Panc1 (cell line): ENCODE measurements at regions of chr2 and their contacts with region 1.

Region 1: GRCh38 chr2:84999553-84999955 is 28.6 kb downstream of the KCMF1 start:
- DNase-seq: no peak
- ATAC-seq: no peak
- H3K4me3 ChIP-seq: no peak overlapping the region
- H3K27ac ChIP-seq: no peak overlapping the region
- H3K4me1 ChIP-seq: peaks cover 18% of the 10 kb centered on the region
- H3K27me3 ChIP-seq: no peaks in the 10 kb centered on the region
- CTCF ChIP-seq: no peak

Region 2: GRCh38 chr2:84931384-84931821 is 68.2 kb before region 1 on chr2:
- CTCF ChIA-PET with region 1: no interaction called
- POLR2A ChIA-PET with region 1: interaction called, 12 read pairs
- in situ Hi-C with region 1: no loop called
- intact Hi-C with region 1: no loop called
- DNase-seq: no peak
- ATAC-seq: no peak
- H3K4me3 ChIP-seq: no peak overlapping the region
- H3K27ac ChIP-seq: no peak overlapping the region
- H3K4me1 ChIP-seq: no peaks in the 10 kb centered on the region
- H3K27me3 ChIP-seq: no peaks in the 10 kb centered on the region
- CTCF ChIP-seq: no peak

Region 3: GRCh38 chr2:84980263-84980983 is 19.1 kb before region 1 on chr2:
- CTCF ChIA-PET with region 1: no interaction called
- POLR2A ChIA-PET with region 1: no interaction called
- in situ Hi-C with region 1: no loop called
- intact Hi-C with region 1: loop called (anchors 2 kb)
- DNase-seq: no peak
- ATAC-seq: peak; percentile 39; the same call in 1 of the 2 replicates
- H3K4me3 ChIP-seq: no peak overlapping the region
- H3K27ac ChIP-seq: no peak overlapping the region
- H3K4me1 ChIP-seq: peaks cover 14% of the 10 kb centered on the region
- H3K27me3 ChIP-seq: no peaks in the 10 kb centered on the region
- CTCF ChIP-seq: no peak

Region 4: GRCh38 chr2:85024372-85025047 is 25.0 kb after region 1 on chr2:
- CTCF ChIA-PET with region 1: no interaction called
- POLR2A ChIA-PET with region 1: interaction called, 13 read pairs
- in situ Hi-C with region 1: no loop called
- intact Hi-C with region 1: no loop called
- DNase-seq: no peak
- ATAC-seq: no peak
- H3K4me3 ChIP-seq: no peak overlapping the region
- H3K27ac ChIP-seq: no peak overlapping the region
- H3K4me1 ChIP-seq: no peaks in the 10 kb centered on the region
- H3K27me3 ChIP-seq: no peaks in the 10 kb centered on the region
- CTCF ChIP-seq: no peak